Adrenal gland (tissue), 19 donors: ENCODE measurements at regions of chr2 and their contacts with region 1.

Region 1: GRCh38 chr2:64873472-64873924 is 115.7 kb upstream of the SLC1A4 start:
- DNase-seq: peak; percentile 50 to 89 (median 76)
- H3K4me3 ChIP-seq: peak overlapping the region in 1 of 4 donors; percentile 38
- H3K27ac ChIP-seq: no peak overlapping the region
- H3K4me1 ChIP-seq: peaks cover 6 to 12% of the 10 kb centered on the region in 2 donors
- H3K27me3 ChIP-seq: no peaks in the 10 kb centered on the region
- CTCF ChIP-seq: peak; percentile 92 to 98 (median 94)
- POLR2A ChIP-seq: no peak

Region 2: DNA sequence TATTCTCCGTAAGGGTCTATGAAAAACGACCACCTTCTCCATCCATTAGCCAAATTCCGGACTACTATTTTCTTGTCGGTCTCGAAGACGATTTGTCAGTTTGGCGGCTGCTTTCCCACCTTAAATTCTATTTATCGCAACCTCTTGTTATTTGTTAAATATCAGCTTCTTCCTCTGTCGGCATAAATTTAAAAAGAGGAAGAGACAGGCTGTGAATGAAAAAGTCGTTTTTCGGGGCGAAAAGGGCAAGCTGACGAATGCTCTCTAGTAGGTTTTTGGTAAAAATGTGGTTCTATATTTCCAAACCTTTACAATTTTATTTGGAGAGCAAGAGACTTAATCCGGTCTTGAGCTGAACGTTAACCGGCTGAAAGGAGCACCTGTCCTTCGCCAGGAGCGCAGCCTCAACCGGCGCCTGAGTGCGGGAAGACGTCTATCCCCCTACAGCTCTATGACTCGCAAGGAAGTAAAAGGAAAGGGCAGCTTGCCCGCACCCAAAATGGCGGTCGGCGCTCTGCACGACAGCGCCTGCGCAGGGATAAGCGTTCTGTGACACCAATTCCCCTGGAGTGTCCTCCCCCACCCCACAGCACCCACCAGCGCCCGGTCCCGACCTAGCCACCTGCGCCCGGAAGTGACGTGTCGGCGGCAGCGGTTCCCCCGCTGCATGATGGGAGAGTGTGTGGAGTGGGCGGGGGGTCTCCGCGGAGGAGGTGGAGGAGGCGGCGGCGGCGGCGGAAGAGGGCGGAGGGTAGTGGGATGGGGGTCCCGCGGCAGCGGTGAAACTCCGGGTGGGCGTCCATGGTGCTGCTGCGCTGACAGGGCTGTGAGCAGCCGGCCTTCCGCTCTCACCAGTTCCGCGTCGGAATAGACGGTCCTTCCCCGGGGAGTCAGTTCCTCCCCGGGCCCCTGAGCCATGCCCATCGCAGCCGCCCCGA is 349.6 kb before region 1 on chr2 and contains the start of gene AFTPH:
- intact Hi-C with region 1: loop called (anchors 5 to 10 kb)
- DNase-seq: peak; percentile 99 to 100 (median 99)
- H3K4me3 ChIP-seq: peak within 1 kb of the TSS; percentile 63 to 84 (median 72)
- H3K27ac ChIP-seq: peak within 1 kb of the TSS; percentile 73 to 96 (median 95)
- H3K4me1 ChIP-seq: peaks cover 3 to 24% of the 10 kb centered on the region in 2 donors
- H3K27me3 ChIP-seq: no peaks in the 10 kb centered on the region
- CTCF ChIP-seq: peak in 2 of 6 experiments; percentile 3 to 4
- POLR2A ChIP-seq: peak; percentile 71 to 94
- total RNA-seq, gene AFTPH: 25.7 to 42.3 (median 34.2) TPM